K562 (cell line): ENCODE measurements at regions of chr1 and their contacts with region 1.

Region 1: GRCh38 chr1:207025144-207025880 is 7.2 kb downstream of the C1orf116 start:
- DNase-seq: no peak
- ATAC-seq: peak; percentile 6
- H3K4me3 ChIP-seq: peak overlapping the region; percentile 15
- H3K27ac ChIP-seq: peak overlapping the region; percentile 100
- H3K4me1 ChIP-seq: peaks cover 49 to 85% of the 10 kb centered on the region in 2 experiments
- H3K27me3 ChIP-seq: no peaks in the 10 kb centered on the region
- CTCF ChIP-seq: 0 out of 6 replicates have a peak, but pooled peaks of 1 of the 3 experiments have one; percentile 4
- EP300 ChIP-seq: peak; percentile 2; the same call in 1 of the 2 replicates
- POLR2A ChIP-seq: no peak
- RAD21 ChIP-seq: no peak; a peak in 2 of 4 replicates

Region 2: GRCh38 chr1:207040181-207040533 is 14.8 kb after region 1 on chr1:
- CTCF ChIA-PET with region 1: no interaction called
- POLR2A ChIA-PET with region 1: interaction called, 104 read pairs
- in situ Hi-C with region 1: no loop called
- intact Hi-C with region 1: no loop called
- DNase-seq: no peak
- ATAC-seq: peak; percentile 4
- H3K4me3 ChIP-seq: no peak overlapping the region
- H3K27ac ChIP-seq: peak overlapping the region; percentile 19; the same call in 2 of the 3 replicates
- H3K4me1 ChIP-seq: peaks cover 9 to 37% of the 10 kb centered on the region in 2 experiments
- H3K27me3 ChIP-seq: no peaks in the 10 kb centered on the region
- CTCF ChIP-seq: no peak
- EP300 ChIP-seq: no peak
- POLR2A ChIP-seq: no peak
- RAD21 ChIP-seq: no peak

Region 3: DNA sequence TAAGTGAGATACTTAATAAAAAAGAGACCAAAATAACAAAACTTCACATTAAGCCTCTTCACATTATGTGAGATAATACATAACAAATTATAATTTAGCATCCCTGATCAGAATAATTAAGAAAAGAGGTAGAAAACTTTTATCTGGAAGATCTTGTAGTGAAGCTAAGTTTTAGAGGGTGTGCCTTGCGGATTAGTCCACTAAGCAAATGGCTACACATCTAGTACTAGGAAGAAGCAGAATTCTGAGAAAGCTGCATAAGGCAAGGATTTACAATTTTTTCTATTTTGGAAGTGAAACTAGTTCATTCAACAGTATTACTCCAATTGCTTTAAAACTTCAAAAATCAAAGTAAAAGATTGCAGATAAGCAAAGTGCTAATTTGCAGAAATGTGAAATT is 22.2 kb after region 1 on chr1:
- CTCF ChIA-PET with region 1: no interaction called
- POLR2A ChIA-PET with region 1: interaction called, 104 read pairs
- in situ Hi-C with region 1: no loop called
- intact Hi-C with region 1: loop called (anchors 1 kb)
- DNase-seq: no peak
- ATAC-seq: no peak
- H3K4me3 ChIP-seq: peak overlapping the region; percentile 92
- H3K27ac ChIP-seq: no peak overlapping the region
- H3K4me1 ChIP-seq: peaks cover 0 to 46% of the 10 kb centered on the region in 2 experiments
- H3K27me3 ChIP-seq: no peaks in the 10 kb centered on the region
- CTCF ChIP-seq: no peak
- EP300 ChIP-seq: no peak
- POLR2A ChIP-seq: no peak
- RAD21 ChIP-seq: no peak

Region 4: GRCh38 chr1:207181838-207182237 is 156.5 kb after region 1 on chr1:
- CTCF ChIA-PET with region 1: no interaction called
- POLR2A ChIA-PET with region 1: no interaction called
- in situ Hi-C with region 1: no loop called
- intact Hi-C with region 1: no loop called
- DNase-seq: peak in 1 of 4 experiments; percentile 28
- ATAC-seq: peak; percentile 41; the same call in 1 of the 3 replicates
- H3K4me3 ChIP-seq: no peak overlapping the region
- H3K27ac ChIP-seq: no peak overlapping the region
- H3K4me1 ChIP-seq: no peaks in the 10 kb centered on the region
- H3K27me3 ChIP-seq: no peaks in the 10 kb centered on the region
- CTCF ChIP-seq: peak in 2 of 3 experiments; percentile 29 to 66; a peak in 3 of 6 replicates
- EP300 ChIP-seq: no peak
- POLR2A ChIP-seq: no peak
- RAD21 ChIP-seq: peak; percentile 87 to 93